Activated CD4-positive, alpha-beta memory T cell treated with anti-CD3 and anti-CD28 coated beads for 36 hours (primary cell): ENCODE measurements at regions of chr20 and their contacts with region 1.

Region 1: GRCh38 chr20:33666293-33667244 is at the start of gene ACTL10:
- DNase-seq: peak; percentile 93
- H3K4me3 Mint-ChIP-seq: peak within 1 kb of the TSS; percentile 80
- H3K27ac Mint-ChIP-seq: peak within 1 kb of the TSS; percentile 90
- H3K4me1 Mint-ChIP-seq: peaks cover 38% of the 10 kb centered on the region
- H3K27me3 Mint-ChIP-seq: no peaks in the 10 kb centered on the region
- total RNA-seq, gene ACTL10: 1.8 to 2.3 TPM

Region 2: GRCh38 chr20:33401184-33401920 is 265.2 kb before region 1 on chr20 and contains the start of gene CDK5RAP1:
- CTCF ChIA-PET with region 1: interaction called, 14 read pairs
- POLR2A ChIA-PET with region 1: no interaction called
- intact Hi-C with region 1: loop called (anchors 5 kb)
- DNase-seq: peak; percentile 91
- H3K4me3 Mint-ChIP-seq: peak within 1 kb of the TSS; percentile 94
- H3K27ac Mint-ChIP-seq: peak within 1 kb of the TSS; percentile 86
- H3K4me1 Mint-ChIP-seq: peaks cover 40% of the 10 kb centered on the region
- H3K27me3 Mint-ChIP-seq: no peaks in the 10 kb centered on the region
- total RNA-seq, gene CDK5RAP1: 39.6 to 40.3 TPM

Region 3: DNA sequence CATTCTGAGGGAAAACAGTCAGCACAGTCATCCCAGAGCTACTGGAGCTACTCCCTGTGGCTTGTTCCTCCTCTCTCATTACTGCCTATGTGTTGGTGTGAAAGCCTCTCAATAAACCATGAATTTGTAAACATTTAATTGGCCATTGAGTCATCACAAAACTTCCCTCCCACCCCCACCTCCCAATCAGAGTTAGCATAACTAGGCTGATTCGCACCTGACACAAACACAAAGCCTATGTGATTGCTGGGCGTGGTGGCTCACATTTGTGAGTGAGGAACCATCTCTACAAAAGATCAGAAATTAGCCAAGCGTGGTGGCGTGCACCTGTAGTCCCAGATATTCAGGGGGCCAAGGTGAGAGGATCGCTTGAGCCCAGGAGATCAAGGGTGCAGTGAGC is 205.9 kb before region 1 on chr20:
- CTCF ChIA-PET with region 1: interaction called, 55 read pairs
- POLR2A ChIA-PET with region 1: interaction called, 4 read pairs
- intact Hi-C with region 1: loop called (anchors 1 kb)
- DNase-seq: peak; percentile 21
- H3K4me3 Mint-ChIP-seq: no peak overlapping the region
- H3K27ac Mint-ChIP-seq: no peak overlapping the region
- H3K4me1 Mint-ChIP-seq: no peaks in the 10 kb centered on the region
- H3K27me3 Mint-ChIP-seq: no peaks in the 10 kb centered on the region

Region 4: GRCh38 chr20:33594743-33595142 is 71.8 kb before region 1 on chr20:
- CTCF ChIA-PET with region 1: interaction called, 10 read pairs
- POLR2A ChIA-PET with region 1: no interaction called
- intact Hi-C with region 1: no loop called
- DNase-seq: no peak
- H3K4me3 Mint-ChIP-seq: no peak overlapping the region
- H3K27ac Mint-ChIP-seq: no peak overlapping the region
- H3K4me1 Mint-ChIP-seq: peaks cover 10% of the 10 kb centered on the region
- H3K27me3 Mint-ChIP-seq: no peaks in the 10 kb centered on the region

Region 5: DNA sequence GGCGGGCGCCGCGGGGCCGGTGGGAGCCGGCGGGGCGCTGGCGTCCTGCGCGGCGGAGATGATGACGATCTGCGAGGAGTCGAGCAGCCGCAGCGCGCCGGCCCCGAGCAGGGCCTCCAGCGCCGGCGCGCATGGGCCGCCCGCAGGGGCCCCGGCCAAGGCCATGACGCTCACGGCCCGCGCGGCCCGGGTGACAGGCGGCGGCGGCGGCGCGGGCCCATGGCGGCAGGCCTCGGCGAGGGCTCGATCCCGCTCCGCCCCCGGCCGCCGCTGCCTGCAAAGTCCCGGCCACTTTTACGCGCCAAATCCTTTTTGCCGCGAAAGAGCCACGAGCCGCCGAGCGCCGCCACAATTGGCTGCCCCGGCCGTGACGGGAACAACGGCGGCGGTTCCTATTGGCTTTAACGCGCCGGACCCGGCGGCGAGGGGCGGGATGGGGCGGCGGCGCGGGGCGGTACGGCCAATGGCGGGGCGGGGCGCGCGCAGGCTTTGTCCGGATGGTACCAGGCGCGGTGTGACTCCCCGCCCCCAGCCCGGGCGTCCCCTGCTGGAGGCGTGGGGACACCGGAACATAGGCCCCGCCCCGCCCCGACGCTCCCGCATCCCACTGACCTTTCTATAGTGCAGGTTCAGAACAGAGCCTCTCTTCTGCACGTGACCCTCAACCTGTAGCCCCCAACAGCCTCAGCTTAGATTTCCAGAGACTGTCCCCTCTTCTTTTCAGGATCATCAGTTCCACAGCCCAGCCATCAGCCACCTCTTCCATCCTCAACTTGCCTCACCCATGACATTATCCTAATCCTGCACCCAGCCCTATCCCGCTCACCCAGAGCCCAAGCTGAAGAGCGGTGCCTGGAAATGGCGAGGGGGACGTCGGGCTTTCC is 19.8 kb after region 1 on chr20 and contains the start of gene E2F1:
- CTCF ChIA-PET with region 1: interaction called, 28 read pairs
- POLR2A ChIA-PET with region 1: interaction called, 21 read pairs
- intact Hi-C with region 1: loop called (anchors 2 kb)
- DNase-seq: peak; percentile 98
- H3K4me3 Mint-ChIP-seq: peak within 1 kb of the TSS; percentile 93
- H3K27ac Mint-ChIP-seq: peak within 1 kb of the TSS; percentile 87
- H3K4me1 Mint-ChIP-seq: peaks cover 70% of the 10 kb centered on the region
- H3K27me3 Mint-ChIP-seq: no peaks in the 10 kb centered on the region
- total RNA-seq, gene E2F1: 66.8 to 67.8 TPM

Region 6: DNA sequence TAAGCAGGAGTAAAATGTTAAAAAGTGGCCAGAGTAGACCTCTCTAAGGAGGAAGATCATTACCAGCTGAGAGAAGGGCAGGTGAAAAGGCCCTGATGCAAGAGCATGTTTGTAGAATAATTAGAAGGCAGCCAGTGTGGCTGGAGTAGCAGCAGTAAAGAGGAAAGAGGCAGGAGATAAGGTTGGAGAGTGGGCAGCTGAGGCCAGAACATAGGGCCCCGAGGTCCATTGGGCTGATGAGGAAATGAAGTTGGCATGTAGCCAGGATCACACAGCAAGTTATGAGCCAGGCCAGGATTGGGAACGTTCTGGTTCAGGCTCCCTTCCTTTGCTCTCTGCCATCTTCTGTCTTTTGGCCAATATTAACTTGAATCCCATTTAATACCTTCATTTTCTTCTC is 378.7 kb after region 1 on chr20:
- CTCF ChIA-PET with region 1: no interaction called
- POLR2A ChIA-PET with region 1: no interaction called
- intact Hi-C with region 1: no loop called
- DNase-seq: no peak
- H3K4me3 Mint-ChIP-seq: no peak overlapping the region
- H3K27ac Mint-ChIP-seq: no peak overlapping the region
- H3K4me1 Mint-ChIP-seq: peaks cover 77% of the 10 kb centered on the region
- H3K27me3 Mint-ChIP-seq: no peaks in the 10 kb centered on the region

Region 7: GRCh38 chr20:34111702-34112599 is 445.4 kb after region 1 on chr20 and contains the start of gene EIF2S2:
- CTCF ChIA-PET with region 1: no interaction called
- POLR2A ChIA-PET with region 1: interaction called, 10 read pairs
- intact Hi-C with region 1: no loop called
- DNase-seq: peak; percentile 97
- H3K4me3 Mint-ChIP-seq: peak within 1 kb of the TSS; percentile 97
- H3K27ac Mint-ChIP-seq: peak within 1 kb of the TSS; percentile 98
- H3K4me1 Mint-ChIP-seq: peaks cover 41% of the 10 kb centered on the region
- H3K27me3 Mint-ChIP-seq: no peaks in the 10 kb centered on the region
- total RNA-seq, gene EIF2S2: 151 to 155 TPM